Calu3 (cell line): ENCODE measurements at regions of chr16 and their contacts with region 1.

Region 1: DNA sequence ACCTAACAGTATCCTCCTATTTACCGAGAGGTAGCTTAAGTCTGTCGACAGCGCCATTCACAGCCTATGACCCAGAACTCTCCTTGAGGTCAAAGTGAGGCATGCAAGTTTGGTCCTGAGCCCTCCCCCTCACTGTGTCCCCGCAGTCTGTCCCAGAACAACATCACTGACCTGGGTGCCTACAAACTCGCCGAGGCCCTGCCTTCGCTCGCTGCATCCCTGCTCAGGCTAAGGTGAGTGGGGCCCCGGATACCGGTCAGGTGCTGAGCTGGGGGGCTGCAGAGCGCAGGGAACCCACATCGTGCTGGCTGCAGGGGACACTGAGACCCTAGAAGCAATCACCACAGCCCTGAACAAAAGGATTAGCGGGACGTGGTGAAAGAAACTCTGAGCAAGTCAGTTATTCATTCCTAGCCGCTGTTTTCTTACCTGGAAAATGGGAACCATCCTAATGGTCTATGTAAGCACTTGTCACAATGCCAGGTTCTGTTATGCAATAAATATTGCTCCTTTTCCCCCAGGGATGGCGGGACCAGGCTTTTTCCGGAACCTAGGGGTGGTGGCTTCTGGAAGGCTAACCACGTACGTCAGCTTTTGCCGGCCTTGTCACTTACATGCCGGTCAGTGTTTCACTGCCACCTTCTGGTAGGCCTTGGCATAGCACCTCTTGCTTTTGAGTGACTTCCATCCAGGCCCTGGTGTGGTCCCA is 23.8 kb downstream of the DEXI start:
- DNase-seq: peak; percentile 95
- H3K4me3 Mint-ChIP-seq: no peak overlapping the region
- H3K27ac Mint-ChIP-seq: no peak overlapping the region
- H3K4me1 Mint-ChIP-seq: peaks cover 8% of the 10 kb centered on the region
- H3K27me3 Mint-ChIP-seq: no peaks in the 10 kb centered on the region
- CTCF ChIP-seq: peak; percentile 93

Region 2: GRCh38 chr16:10509534-10510025 is 408.9 kb before region 1 on chr16:
- CTCF ChIA-PET with region 1: interaction called, 11 read pairs
- intact Hi-C with region 1: no loop called
- DNase-seq: peak; percentile 87
- H3K4me3 Mint-ChIP-seq: no peak overlapping the region
- H3K27ac Mint-ChIP-seq: no peak overlapping the region
- H3K4me1 Mint-ChIP-seq: peaks cover 7% of the 10 kb centered on the region
- H3K27me3 Mint-ChIP-seq: no peaks in the 10 kb centered on the region
- CTCF ChIP-seq: peak; percentile 84

Region 3: GRCh38 chr16:10579965-10580882 is 338.2 kb before region 1 on chr16 and contains the start of gene EMP2:
- CTCF ChIA-PET with region 1: no interaction called
- intact Hi-C with region 1: loop called (anchors 5 kb)
- DNase-seq: peak; percentile 93
- H3K4me3 Mint-ChIP-seq: peak within 1 kb of the TSS; percentile 83
- H3K27ac Mint-ChIP-seq: peak within 1 kb of the TSS; percentile 56
- H3K4me1 Mint-ChIP-seq: peaks cover 41% of the 10 kb centered on the region
- H3K27me3 Mint-ChIP-seq: peaks cover 14% of the 10 kb centered on the region
- CTCF ChIP-seq: peak; percentile 71
- total RNA-seq, gene EMP2: 65.9 and 73.9 TPM in 2 replicates

Region 4: GRCh38 chr16:10743610-10744393 is 174.6 kb before region 1 on chr16 and contains the start of gene NUBP1:
- CTCF ChIA-PET with region 1: interaction called, 11 read pairs
- intact Hi-C with region 1: loop called (anchors 2 kb)
- DNase-seq: peak; percentile 99
- H3K4me3 Mint-ChIP-seq: peak within 1 kb of the TSS; percentile 92
- H3K27ac Mint-ChIP-seq: peak within 1 kb of the TSS; percentile 96
- H3K4me1 Mint-ChIP-seq: peaks cover 42% of the 10 kb centered on the region
- H3K27me3 Mint-ChIP-seq: no peaks in the 10 kb centered on the region
- CTCF ChIP-seq: no peak
- total RNA-seq, gene NUBP1: 35.7 and 35.9 TPM in 2 replicates

Region 5: GRCh38 chr16:10770907-10771306 is 147.5 kb before region 1 on chr16:
- CTCF ChIA-PET with region 1: no interaction called
- intact Hi-C with region 1: loop called (anchors 5 kb)
- DNase-seq: no peak
- H3K4me3 Mint-ChIP-seq: no peak overlapping the region
- H3K27ac Mint-ChIP-seq: no peak overlapping the region
- H3K4me1 Mint-ChIP-seq: peaks cover 13% of the 10 kb centered on the region
- H3K27me3 Mint-ChIP-seq: no peaks in the 10 kb centered on the region
- CTCF ChIP-seq: no peak

Region 6: DNA sequence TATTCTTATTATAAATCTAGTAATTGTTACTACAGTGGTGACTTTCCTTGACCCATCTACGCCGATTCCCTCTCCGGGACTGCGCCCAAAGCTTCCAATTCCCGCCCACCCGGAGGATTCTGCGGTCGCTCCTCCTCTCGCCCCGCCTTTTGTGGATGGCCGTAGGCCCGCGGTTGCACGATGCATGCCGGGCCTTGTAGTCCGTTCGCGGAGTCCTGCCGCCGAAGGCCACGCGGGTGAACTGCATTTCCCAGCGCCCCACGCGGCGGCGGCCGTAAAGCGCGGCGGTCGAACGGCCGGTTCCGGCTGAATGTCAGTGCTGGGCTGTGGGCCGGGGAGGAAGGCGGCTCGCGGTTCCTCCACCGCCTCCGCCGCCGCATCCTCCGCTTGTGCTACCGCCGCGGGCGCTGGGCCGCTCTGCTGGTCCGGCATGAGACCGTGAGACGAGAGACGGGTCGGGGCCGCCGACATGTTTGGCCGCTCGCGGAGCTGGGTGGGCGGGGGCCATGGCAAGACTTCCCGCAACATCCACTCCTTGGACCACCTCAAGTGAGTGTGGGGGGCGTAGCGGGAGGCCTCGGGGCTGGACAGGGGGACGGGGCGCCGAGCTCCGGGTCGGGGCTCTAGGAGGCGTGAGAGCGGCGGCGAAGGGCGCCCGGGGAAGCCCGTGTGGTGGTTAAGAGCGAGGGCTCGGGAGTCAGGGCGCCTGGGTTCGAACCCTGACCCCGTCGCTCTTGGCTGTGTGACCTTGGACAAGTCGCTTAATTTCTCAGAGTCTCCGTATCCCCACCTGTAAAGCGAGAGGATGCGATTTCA is 26.0 kb after region 1 on chr16 and contains the start of gene CLEC16A:
- CTCF ChIA-PET with region 1: no interaction called
- intact Hi-C with region 1: no loop called
- DNase-seq: peak; percentile 99
- H3K4me3 Mint-ChIP-seq: peak within 1 kb of the TSS; percentile 96
- H3K27ac Mint-ChIP-seq: peak within 1 kb of the TSS; percentile 10
- H3K4me1 Mint-ChIP-seq: peaks cover 64% of the 10 kb centered on the region
- H3K27me3 Mint-ChIP-seq: no peaks in the 10 kb centered on the region
- CTCF ChIP-seq: no peak
- total RNA-seq, gene CLEC16A: 33.0 and 37.5 TPM in 2 replicates